ENCODE measurements at regions of chr12 and their contacts with region 1.

Region 1: DNA sequence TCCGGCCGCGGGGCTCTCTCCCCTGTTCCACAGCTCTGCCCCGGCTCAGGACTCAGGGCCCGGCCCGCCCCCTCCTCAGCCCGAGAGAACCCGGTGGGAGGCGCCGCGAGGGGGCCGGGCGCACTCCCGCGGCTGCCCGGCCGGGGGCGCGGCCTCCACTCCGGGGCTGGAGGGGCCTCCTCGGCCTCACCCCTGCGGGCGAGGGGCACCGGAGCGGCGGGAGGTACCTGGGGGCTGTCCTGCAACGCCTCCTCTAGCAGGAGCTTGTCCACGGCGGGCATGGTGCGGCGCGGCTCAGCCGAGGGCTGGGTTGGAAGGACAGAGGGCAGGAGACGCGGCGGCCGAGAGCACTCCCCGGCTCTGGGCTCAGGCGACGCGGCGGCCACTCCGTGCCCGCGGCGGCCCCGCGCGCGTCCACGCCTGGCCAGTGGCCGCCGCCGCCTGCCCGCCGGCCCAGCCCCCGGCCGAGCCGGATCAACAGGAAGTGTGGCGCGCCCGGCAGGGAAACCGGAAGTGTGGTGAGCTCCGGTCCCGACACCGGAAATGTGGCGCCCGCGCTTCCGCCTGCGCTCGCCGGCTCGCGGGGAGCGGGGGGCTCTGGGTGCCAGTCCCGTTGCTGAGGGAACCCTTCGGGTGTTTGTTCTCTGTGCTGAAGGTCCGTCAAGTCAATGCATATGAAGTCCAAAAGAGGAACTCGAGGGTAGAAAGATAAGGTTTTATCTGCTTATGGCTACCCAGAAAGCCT is at the start of gene APPL2:
- DNase-seq: peak; percentile 86 to 89
- ATAC-seq: peak; percentile 84 to 89
- H3K4me3 ChIP-seq: peak within 1 kb of the TSS; percentile 77 to 97 (median 86)
- H3K27ac ChIP-seq: peak within 1 kb of the TSS; percentile 89 to 99 (median 98)
- H3K4me1 ChIP-seq: peaks cover 38 to 43% of the 10 kb centered on the region in 2 donors
- H3K27me3 ChIP-seq: no peaks in the 10 kb centered on the region
- CTCF ChIP-seq: peak in 4 of 5 experiments; percentile 45 to 63 (median 59)
- POLR2A ChIP-seq: peak; percentile 77 to 91
- total RNA-seq, gene APPL2: 12.8 to 24.3 (median 19.8) TPM

Region 2: DNA sequence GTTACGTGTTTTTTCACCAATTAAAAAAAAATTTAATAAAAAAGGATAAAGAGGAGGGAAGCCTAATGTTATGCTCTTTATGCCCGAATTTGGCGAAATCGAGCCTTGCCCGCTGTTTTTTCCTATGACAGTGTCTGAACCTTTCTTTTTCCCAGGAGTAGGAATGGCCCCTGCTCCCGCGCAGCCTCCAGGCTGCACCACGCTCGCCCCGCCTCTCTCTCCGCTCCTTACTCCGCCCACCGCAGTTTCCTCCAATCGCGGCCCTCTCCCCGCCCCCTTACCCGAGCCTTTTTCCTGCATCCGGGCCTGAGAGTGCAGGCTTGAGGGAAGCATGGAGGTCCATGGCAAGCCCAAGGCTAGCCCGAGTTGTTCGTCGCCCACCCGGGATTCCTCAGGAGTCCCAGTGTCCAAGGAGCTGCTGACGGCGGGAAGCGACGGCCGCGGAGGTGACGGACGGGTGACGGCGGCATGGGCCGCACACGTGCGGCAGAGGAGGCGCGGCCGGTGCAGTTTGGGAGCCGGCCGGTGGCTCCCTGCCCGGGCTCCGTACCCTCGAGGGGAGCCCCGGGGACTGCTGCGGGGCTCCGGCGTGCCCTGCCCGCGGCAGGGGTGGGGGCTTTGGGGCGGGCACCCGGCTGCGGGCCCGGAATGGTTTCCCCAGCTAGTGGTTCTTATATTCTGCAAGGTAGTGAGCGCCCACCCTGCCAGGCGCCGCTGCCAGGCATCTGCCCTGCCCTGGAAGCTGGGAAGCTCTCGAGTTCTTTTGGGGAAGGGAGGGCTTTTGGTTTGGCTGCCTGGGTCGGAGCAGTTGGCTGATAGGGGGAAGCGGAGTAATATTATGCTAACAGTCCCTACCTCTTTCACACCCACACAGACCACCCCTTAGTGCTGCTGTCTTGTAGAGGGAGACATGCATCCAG is 249.6 kb before region 1 on chr12 and contains the start of gene NOPCHAP1:
- in situ Hi-C with region 1: no loop called
- intact Hi-C with region 1: loop called (anchors 5 kb)
- DNase-seq: peak; percentile 80 to 87
- ATAC-seq: peak; percentile 99 to 100
- H3K4me3 ChIP-seq: peak within 1 kb of the TSS; percentile 74 to 97 (median 86)
- H3K27ac ChIP-seq: peak within 1 kb of the TSS; percentile 67 to 85 (median 81)
- H3K4me1 ChIP-seq: peaks cover 11 to 16% of the 10 kb centered on the region in 2 donors
- H3K27me3 ChIP-seq: no peaks in the 10 kb centered on the region
- CTCF ChIP-seq: no peak
- POLR2A ChIP-seq: peak in 1 of 2 donors; percentile 31
- total RNA-seq, gene NOPCHAP1: 2.5 to 5.0 (median 3.3) TPM

Region 3: DNA sequence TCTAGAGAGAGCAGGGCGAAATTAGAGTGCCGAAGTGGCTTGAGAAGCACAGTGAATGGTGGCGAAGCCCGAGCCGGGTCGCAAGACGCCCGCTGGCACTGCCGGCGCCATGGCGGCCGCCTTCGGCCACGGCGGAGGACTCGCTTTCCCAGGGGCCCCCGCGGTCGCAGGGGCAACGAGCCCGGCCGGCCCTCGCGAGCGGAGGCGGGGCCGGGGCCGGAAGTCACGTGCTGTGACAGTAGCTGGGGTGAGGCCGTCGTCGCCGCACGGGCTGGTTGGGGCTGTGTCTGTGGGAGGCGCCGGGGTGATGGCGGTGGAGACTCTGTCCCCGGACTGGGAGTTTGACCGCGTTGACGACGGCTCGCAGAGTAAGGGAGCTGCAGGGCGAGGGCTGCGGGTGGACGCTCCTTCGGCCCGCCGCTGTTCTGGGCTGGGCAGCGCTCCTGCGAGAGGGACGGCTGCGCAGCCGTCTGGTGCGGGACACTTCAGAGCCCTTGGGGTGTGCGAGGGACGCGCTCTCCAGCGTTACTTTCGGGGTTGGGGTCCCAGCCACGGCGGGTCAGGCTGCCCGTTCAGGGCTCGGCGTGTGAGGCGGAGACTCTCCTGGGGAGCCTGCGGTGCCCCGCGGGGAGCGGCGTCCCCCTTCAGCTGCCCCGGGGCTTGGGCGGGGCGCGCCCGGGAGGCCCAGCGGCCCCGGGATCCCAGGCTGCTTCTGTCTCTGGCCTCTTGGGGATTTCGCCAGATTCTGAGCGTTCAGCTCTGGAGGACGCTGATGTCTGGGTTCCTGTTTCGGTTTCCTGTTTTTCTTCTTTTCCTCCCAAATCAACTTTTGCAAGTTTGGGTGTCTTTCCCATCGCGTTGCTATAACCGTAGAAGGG is 128.2 kb before region 1 on chr12 and contains the start of gene WASHC4:
- in situ Hi-C with region 1: no loop called
- intact Hi-C with region 1: loop called (anchors 1 kb)
- DNase-seq: peak; percentile 90
- ATAC-seq: peak; percentile 94 to 96
- H3K4me3 ChIP-seq: peak within 1 kb of the TSS; percentile 91 to 95 (median 93)
- H3K27ac ChIP-seq: peak within 1 kb of the TSS; percentile 92 to 98 (median 96)
- H3K4me1 ChIP-seq: peaks cover 30 to 32% of the 10 kb centered on the region in 2 donors
- H3K27me3 ChIP-seq: no peaks in the 10 kb centered on the region
- CTCF ChIP-seq: peak in 1 of 5 experiments; percentile 16
- POLR2A ChIP-seq: peak; percentile 96 to 97
- total RNA-seq, gene WASHC4: 23.6 to 53.2 (median 36.7) TPM

Region 4: DNA sequence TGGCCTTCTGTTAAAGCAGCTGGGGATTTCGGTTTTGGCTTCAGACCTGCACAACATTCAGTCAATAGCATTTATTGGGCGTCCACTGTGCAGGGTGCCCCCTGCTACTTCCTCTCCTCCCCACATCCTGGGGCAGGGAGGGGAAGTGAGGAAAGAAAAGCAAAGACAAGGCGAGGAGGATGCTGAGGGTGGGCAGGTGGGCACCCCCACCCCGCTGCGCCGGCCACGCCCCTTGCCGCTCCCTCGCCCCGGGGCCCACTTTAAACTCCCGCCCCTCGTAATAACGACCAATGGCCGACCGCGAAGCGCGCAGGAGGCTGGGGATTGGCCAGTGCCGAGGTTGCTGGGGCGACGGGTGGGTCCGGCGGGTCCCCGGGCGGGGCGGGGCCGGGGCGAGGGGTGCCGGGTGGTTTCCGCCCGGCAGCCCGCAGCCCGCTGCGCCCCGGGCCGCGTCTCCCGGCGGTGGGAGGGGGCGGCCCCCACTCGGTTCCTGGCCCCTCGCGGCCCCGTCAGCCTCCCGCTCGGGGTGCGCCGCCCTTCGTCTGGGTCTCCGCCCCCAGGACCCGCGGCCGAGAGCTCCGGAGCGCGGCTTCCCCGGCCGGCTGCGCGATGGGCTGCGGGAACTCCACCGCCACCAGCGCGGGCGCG is 94.5 kb after region 1 on chr12 and contains the start of gene C12orf75:
- in situ Hi-C with region 1: no loop called
- intact Hi-C with region 1: loop called (anchors 5 kb)
- DNase-seq: peak; percentile 31 to 37
- ATAC-seq: peak; percentile 63 to 78
- H3K4me3 ChIP-seq: peak within 1 kb of the TSS; percentile 64 to 69 (median 66)
- H3K27ac ChIP-seq: peak within 1 kb of the TSS in 3 of 4 donors; percentile 45 to 62 (median 49)
- H3K4me1 ChIP-seq: peaks cover 8 to 9% of the 10 kb centered on the region in 2 donors
- H3K27me3 ChIP-seq: no peaks in the 10 kb centered on the region
- CTCF ChIP-seq: no peak
- POLR2A ChIP-seq: peak in 1 of 2 donors; percentile 14
- total RNA-seq, gene C12orf75: 4.3 to 73.0 (median 17.3) TPM

Region 5: GRCh38 chr12:106296193-106296877 is 1060.4 kb after region 1 on chr12:
- in situ Hi-C with region 1: no loop called
- intact Hi-C with region 1: loop called (anchors 5 kb)
- DNase-seq: peak in 1 of 2 donors; percentile 31
- ATAC-seq: peak; percentile 62 to 84
- H3K4me3 ChIP-seq: no peak overlapping the region
- H3K27ac ChIP-seq: peak overlapping the region in 2 of 4 donors; percentile 23 to 40
- H3K4me1 ChIP-seq: peaks cover 22 to 24% of the 10 kb centered on the region in 2 donors
- H3K27me3 ChIP-seq: no peaks in the 10 kb centered on the region
- CTCF ChIP-seq: no peak
- POLR2A ChIP-seq: no peak